MCF 10A (cell line): ENCODE measurements at regions of chr1 and their contacts with region 1.

Region 1: DNA sequence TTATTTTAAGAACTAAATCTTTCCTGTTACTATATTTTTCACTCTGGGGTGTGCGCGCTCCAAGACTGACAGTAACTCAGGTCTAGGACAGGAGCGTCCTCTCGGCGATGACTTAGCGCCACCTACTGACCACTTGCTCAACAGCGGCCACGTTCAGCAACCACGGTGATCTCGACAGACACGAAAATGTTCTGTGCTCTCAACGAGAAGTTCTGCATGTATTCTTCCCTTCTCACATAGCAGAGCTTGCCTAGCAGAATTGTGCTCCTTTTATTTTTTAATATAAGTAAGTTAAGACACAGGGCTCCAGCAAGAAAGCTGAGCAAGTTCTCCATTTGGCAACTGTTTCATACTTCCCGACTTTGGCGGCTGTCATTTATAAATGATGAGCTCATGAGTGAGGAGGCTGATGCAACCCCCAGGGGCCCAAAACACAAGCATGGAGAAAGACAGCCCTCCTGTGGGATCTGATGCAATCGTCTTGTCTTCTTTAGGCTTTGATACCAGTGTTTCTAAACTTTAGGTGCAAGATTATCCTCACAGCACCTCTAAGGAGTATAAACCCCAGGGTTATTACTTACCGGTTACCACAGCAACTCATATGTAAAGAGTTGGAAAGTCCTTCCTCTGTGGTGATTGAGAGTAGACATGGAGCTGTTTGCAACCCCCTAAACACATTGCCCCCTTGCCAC is 92.6 kb downstream of the HHIPL2 start:
- DNase-seq: peak; percentile 97
- H3K4me3 Mint-ChIP-seq: peak overlapping the region; percentile 37
- H3K27ac Mint-ChIP-seq: peak overlapping the region; percentile 54
- H3K4me1 Mint-ChIP-seq: peaks cover 16% of the 10 kb centered on the region
- H3K27me3 Mint-ChIP-seq: no peaks in the 10 kb centered on the region
- CTCF ChIP-seq: peak; percentile 100

Region 2: GRCh38 chr1:221470000-221470698 is 985.2 kb before region 1 on chr1:
- CTCF ChIA-PET with region 1: interaction called, 163 read pairs
- POLR2A ChIA-PET with region 1: interaction called, 3 read pairs
- intact Hi-C with region 1: no loop called
- DNase-seq: no peak
- H3K4me3 Mint-ChIP-seq: no peak overlapping the region
- H3K27ac Mint-ChIP-seq: no peak overlapping the region
- H3K4me1 Mint-ChIP-seq: no peaks in the 10 kb centered on the region
- H3K27me3 Mint-ChIP-seq: no peaks in the 10 kb centered on the region
- CTCF ChIP-seq: no peak

Region 3: GRCh38 chr1:221741711-221742554 is 713.4 kb before region 1 on chr1 and contains the start of gene DUSP10:
- CTCF ChIA-PET with region 1: interaction called, 40 read pairs
- POLR2A ChIA-PET with region 1: interaction called, 21 read pairs
- intact Hi-C with region 1: loop called (anchors 1 kb)
- DNase-seq: peak; percentile 100
- H3K4me3 Mint-ChIP-seq: no peak within 1 kb of the TSS
- H3K27ac Mint-ChIP-seq: no peak within 1 kb of the TSS
- H3K4me1 Mint-ChIP-seq: peaks cover 25% of the 10 kb centered on the region
- H3K27me3 Mint-ChIP-seq: no peaks in the 10 kb centered on the region
- CTCF ChIP-seq: no peak
- total RNA-seq, gene DUSP10: 15.9 and 22.0 TPM in 2 replicates

Region 4: GRCh38 chr1:222105393-222105737 is 350.0 kb before region 1 on chr1:
- CTCF ChIA-PET with region 1: interaction called, 20 read pairs
- POLR2A ChIA-PET with region 1: interaction called, 3 read pairs
- intact Hi-C with region 1: no loop called
- DNase-seq: no peak
- H3K4me3 Mint-ChIP-seq: no peak overlapping the region
- H3K27ac Mint-ChIP-seq: no peak overlapping the region
- H3K4me1 Mint-ChIP-seq: no peaks in the 10 kb centered on the region
- H3K27me3 Mint-ChIP-seq: no peaks in the 10 kb centered on the region
- CTCF ChIP-seq: no peak

Region 5: DNA sequence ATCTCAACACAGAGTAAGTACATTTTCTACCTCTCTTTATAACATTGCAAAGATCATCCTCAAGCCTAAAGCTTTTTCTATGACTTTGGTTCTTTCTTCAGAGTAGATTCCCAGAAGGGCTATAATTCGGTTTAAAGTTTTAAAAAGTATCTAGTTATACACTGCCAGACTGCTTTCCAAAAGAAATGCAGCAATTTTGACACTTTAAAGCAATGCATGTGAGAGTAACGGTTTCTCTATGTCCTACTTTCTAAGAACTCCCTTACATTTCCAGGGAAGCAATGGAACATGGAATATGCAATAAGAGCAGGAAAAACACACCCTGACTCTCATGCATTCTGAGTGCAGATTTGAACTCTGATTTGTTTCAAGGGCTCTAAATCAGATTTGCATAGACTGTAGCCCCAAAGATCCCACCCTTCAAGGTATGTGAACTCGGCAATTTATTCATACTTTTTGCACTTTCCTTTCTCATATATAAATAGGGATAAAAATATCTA is 239.0 kb before region 1 on chr1:
- CTCF ChIA-PET with region 1: interaction called, 32 read pairs
- POLR2A ChIA-PET with region 1: interaction called, 8 read pairs
- intact Hi-C with region 1: loop called (anchors 1 kb)
- DNase-seq: no peak
- H3K4me3 Mint-ChIP-seq: no peak overlapping the region
- H3K27ac Mint-ChIP-seq: no peak overlapping the region
- H3K4me1 Mint-ChIP-seq: no peaks in the 10 kb centered on the region
- H3K27me3 Mint-ChIP-seq: no peaks in the 10 kb centered on the region
- CTCF ChIP-seq: no peak

Region 6: GRCh38 chr1:222370081-222370912 is 85.0 kb before region 1 on chr1:
- CTCF ChIA-PET with region 1: interaction called, 10 read pairs
- POLR2A ChIA-PET with region 1: no interaction called
- intact Hi-C with region 1: loop called (anchors 2 kb)
- DNase-seq: peak; percentile 78
- H3K4me3 Mint-ChIP-seq: no peak overlapping the region
- H3K27ac Mint-ChIP-seq: peak overlapping the region; percentile 94
- H3K4me1 Mint-ChIP-seq: peaks cover 20% of the 10 kb centered on the region
- H3K27me3 Mint-ChIP-seq: no peaks in the 10 kb centered on the region
- CTCF ChIP-seq: no peak

Region 7: GRCh38 chr1:222777977-222778376 is 322.6 kb after region 1 on chr1:
- CTCF ChIA-PET with region 1: no interaction called
- POLR2A ChIA-PET with region 1: no interaction called
- intact Hi-C with region 1: no loop called
- DNase-seq: peak; percentile 100
- H3K4me3 Mint-ChIP-seq: peak overlapping the region; percentile 28
- H3K27ac Mint-ChIP-seq: peak overlapping the region; percentile 77
- H3K4me1 Mint-ChIP-seq: peaks cover 21% of the 10 kb centered on the region
- H3K27me3 Mint-ChIP-seq: peaks cover 14% of the 10 kb centered on the region
- CTCF ChIP-seq: no peak